Aorta (tissue), 5 donors: ENCODE measurements at regions of chr5 and their contacts with region 1.

Region 1: GRCh38 chr5:176415952-176416924 is at the start of gene CLTB:
- DNase-seq: peak; percentile 93 to 98
- ATAC-seq: peak; percentile 98
- H3K4me3 ChIP-seq: peak within 1 kb of the TSS; percentile 91 to 98
- H3K27ac ChIP-seq: peak within 1 kb of the TSS; percentile 89 to 90
- H3K4me1 ChIP-seq: no peaks in the 10 kb centered on the region
- H3K27me3 ChIP-seq: no peaks in the 10 kb centered on the region
- total RNA-seq, gene CLTB: 86.7 to 124 TPM

Region 2: DNA sequence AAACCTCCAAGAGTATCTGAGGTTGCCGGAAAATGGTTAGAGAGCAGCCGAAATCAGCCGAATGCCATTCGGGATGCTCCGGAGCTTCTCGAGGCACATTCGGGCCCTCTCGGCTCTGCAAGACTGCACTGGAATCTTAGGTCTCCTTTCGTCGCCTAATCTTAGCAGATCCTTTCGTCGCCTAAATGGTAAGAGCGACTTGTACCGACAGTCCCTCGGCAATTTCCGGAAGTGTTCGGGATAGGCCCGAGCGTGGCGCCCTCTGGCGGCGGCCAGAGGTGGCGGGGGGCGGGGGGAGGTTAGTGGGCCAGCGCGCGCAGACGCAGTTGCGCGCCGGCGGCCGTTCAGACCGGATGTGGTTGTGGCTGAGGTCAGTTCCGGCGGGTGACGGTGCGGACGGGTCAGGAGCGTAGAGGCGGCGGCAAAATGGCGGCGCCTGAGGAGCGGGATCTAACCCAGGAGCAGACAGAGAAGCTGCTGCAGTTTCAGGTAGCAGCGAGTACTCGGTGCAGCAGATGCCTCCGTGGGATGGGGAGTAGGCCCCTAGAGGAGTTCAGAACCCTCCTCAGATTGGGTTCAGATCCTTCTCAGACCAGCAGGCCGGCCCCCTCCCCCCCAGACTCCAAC is 31.9 kb after region 1 on chr5 and contains the start of gene FAF2:
- intact Hi-C with region 1: loop called (anchors 1 to 2 kb)
- DNase-seq: peak; percentile 98 to 99
- ATAC-seq: peak; percentile 99
- H3K4me3 ChIP-seq: peak within 1 kb of the TSS; percentile 68 to 95
- H3K27ac ChIP-seq: peak within 1 kb of the TSS; percentile 77 to 93
- H3K4me1 ChIP-seq: peaks cover 0 to 1% of the 10 kb centered on the region in 2 donors
- H3K27me3 ChIP-seq: no peaks in the 10 kb centered on the region
- total RNA-seq, gene FAF2: 27.5 to 31.4 TPM

Region 3: GRCh38 chr5:176647030-176647866 is 231.0 kb after region 1 on chr5 and contains the start of gene TSPAN17:
- intact Hi-C with region 1: loop called (anchors 10 kb)
- DNase-seq: peak; percentile 100
- ATAC-seq: peak; percentile 98
- H3K4me3 ChIP-seq: peak within 1 kb of the TSS; percentile 40 to 82
- H3K27ac ChIP-seq: peak within 1 kb of the TSS in 1 of 2 donors; percentile 26
- H3K4me1 ChIP-seq: no peaks in the 10 kb centered on the region
- H3K27me3 ChIP-seq: no peaks in the 10 kb centered on the region
- total RNA-seq, gene TSPAN17: 17.9 to 22.9 TPM

Region 4: DNA sequence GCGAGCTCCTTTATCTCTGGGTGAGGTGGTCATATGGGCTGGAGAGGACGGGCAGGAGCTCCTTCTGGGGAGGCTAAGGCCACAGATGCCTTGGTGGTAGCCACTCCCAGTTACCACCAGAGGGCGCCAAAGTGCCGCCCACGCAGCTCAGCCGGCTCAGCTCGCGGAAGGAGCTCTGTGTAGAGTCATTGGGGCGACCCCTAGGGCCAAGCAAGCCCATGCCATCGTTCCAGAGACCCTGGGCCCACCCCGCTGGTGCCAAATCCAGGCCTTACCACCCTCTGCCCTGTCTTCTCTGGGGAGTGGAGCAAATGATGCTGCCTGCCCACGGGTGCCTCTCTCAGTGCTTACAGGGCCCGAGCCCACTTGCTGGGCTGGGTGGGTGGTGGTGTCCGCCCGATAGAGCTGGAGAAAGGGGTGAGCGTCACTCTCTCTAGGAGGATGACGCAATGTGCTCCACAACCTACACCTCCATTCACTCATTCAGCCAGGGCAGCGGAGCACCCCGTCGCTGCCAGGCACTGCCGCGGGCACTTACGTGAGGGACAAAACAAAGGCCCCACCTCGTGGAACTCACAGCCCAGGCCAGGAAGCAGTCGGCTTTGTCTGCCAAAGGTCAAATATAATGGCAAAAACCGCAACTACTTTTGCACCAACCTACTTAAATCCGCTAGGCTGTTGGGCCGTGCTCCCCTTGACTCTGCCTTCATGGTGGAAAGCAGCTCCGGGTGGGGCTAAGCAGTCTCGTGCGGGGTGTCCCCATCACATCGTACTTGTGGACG is 244.8 kb after region 1 on chr5:
- intact Hi-C with region 1: loop called in 1 of 2 experiments (anchors 10 kb)
- DNase-seq: peak; percentile 79 to 91
- ATAC-seq: peak; percentile 85
- H3K4me3 ChIP-seq: no peak overlapping the region
- H3K27ac ChIP-seq: no peak overlapping the region
- H3K4me1 ChIP-seq: no peaks in the 10 kb centered on the region
- H3K27me3 ChIP-seq: no peaks in the 10 kb centered on the region

Region 5: DNA sequence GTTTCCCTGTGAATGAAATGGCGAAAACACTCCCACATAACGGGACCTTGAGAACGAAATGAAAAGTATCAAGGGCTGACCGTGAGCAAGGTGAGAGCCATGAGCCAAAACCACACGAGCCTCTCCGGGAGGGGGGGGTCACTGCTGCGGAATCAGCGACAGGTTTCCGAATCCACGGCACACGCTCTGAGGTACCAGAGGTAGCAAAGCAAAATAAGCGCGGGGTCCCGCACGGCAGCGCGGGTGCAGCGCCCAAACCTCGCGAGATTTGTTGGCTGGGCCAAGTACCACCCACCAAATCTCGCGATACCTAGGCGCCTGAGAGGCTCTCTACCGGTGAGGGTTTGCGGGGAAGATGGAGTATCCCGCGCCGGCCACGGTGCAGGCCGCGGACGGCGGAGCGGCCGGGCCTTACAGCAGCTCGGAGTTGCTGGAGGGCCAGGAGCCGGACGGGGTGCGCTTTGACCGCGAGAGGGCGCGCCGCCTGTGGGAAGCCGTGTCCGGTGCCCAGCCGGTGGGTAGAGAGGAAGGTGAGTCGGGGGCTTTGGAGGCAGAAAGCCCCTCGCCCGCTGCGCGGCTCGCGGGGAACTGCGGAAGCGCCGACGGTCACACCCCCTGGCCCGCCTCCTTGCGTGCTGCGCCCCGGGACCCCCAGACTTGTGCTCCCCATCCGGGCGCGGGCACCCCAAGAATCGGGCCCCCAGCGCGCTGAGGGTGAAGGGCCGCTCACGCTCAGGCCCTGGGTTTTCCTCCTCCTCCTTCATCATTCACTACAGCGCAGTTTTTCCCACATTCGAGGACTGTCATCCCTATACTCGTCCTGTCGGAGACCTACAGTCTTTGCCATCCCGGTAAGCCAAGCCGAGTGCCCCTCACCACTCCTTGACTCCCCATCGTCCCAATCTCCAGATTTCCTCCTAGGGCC is 606.4 kb after region 1 on chr5 and contains the start of gene ZNF346:
- intact Hi-C with region 1: no loop called
- DNase-seq: peak; percentile 95 to 96
- ATAC-seq: peak; percentile 98
- H3K4me3 ChIP-seq: peak within 1 kb of the TSS; percentile 78 to 80
- H3K27ac ChIP-seq: peak within 1 kb of the TSS; percentile 48 to 53
- H3K4me1 ChIP-seq: peaks cover 0 to 1% of the 10 kb centered on the region in 2 donors
- H3K27me3 ChIP-seq: no peaks in the 10 kb centered on the region
- total RNA-seq, gene ZNF346: 16.8 to 25.7 TPM